K562 (cell line): ENCODE measurements at regions of chr6 and their contacts with region 1.

Region 1: DNA sequence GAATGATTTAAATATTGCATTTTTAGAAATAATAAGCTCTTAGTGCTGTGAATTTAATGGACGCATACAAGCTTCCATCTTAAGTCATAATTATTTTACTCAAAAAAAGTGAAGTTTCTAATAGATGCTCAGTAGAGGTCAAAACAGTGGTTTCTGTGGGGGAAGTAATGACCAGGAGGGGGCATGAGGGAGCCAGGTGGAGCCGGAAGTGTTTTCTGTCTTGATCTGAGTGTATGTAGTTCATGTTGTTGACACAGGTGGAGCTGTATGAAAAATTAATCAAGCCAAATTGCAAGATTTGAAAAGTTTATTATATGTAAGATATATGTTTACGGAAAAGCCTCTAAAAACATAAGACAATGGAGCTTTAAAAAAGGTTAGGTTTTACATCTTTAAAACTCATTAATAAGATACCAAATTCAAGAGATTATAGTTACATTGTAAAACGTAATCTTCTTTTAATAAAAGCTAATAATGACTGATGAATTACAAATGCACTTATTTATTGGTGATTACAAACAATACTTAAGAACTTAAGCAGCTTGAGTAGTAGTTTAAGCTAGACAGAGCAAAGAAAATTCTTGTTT is 68.0 kb downstream of the PLAGL1 start:
- DNase-seq: peak; percentile 81 to 90 (median 86)
- ATAC-seq: peak; percentile 95
- H3K4me3 ChIP-seq: no peak overlapping the region
- H3K27ac ChIP-seq: no peak overlapping the region
- H3K4me1 ChIP-seq: peaks cover 0 to 3% of the 10 kb centered on the region in 2 experiments; a peak in 1 of 5 replicates
- H3K27me3 ChIP-seq: peaks cover 0 to under 1% of the 10 kb centered on the region in 2 experiments; a peak in 1 of 5 replicates
- CTCF ChIP-seq: peak; percentile 91 to 99 (median 98)
- EP300 ChIP-seq: no peak
- POLR2A ChIP-seq: no peak
- RAD21 ChIP-seq: peak; percentile 78 to 86

Region 2: GRCh38 chr6:143575440-143575839 is 364.7 kb before region 1 on chr6:
- CTCF ChIA-PET with region 1: no interaction called
- POLR2A ChIA-PET with region 1: interaction called, 3 read pairs
- in situ Hi-C with region 1: loop called (anchors 5 kb)
- intact Hi-C with region 1: loop called (anchors 2 kb)
- DNase-seq: peak; percentile 79 to 85 (median 84)
- ATAC-seq: peak; percentile 95
- H3K4me3 ChIP-seq: no peak overlapping the region
- H3K27ac ChIP-seq: no peak overlapping the region
- H3K4me1 ChIP-seq: no peaks in the 10 kb centered on the region
- H3K27me3 ChIP-seq: peaks cover 0 to 3% of the 10 kb centered on the region in 2 experiments; a peak in 1 of 5 replicates
- CTCF ChIP-seq: peak; percentile 86 to 97 (median 94)
- EP300 ChIP-seq: no peak
- POLR2A ChIP-seq: no peak
- RAD21 ChIP-seq: peak; percentile 99

Region 3: DNA sequence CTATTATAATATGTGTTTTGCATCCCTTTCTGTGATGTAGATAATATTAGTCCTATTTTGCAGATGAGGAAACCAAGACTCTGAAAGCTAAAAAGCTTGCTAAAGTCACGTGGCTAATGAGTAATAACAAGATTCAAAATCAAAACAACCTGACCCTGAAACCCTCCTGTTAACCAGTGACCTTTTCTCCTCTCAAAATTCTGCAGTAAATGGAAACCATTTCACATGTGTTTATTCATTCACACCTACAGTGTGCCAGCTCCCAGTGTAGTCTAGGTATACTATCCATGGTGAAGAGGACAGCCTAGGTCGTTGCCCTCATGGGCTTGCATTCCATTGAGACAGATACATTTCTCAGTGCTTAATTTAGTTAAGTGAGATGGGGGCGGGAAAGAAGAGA is 292.9 kb before region 1 on chr6:
- CTCF ChIA-PET with region 1: no interaction called
- POLR2A ChIA-PET with region 1: no interaction called
- in situ Hi-C with region 1: no loop called
- intact Hi-C with region 1: no loop called
- DNase-seq: no peak
- ATAC-seq: no peak
- H3K4me3 ChIP-seq: no peak overlapping the region
- H3K27ac ChIP-seq: no peak overlapping the region
- H3K4me1 ChIP-seq: peaks cover 3 to 5% of the 10 kb centered on the region in 2 experiments; a peak in 3 of 5 replicates
- H3K27me3 ChIP-seq: no peaks in the 10 kb centered on the region; a peak in 1 of 5 replicates
- CTCF ChIP-seq: no peak
- EP300 ChIP-seq: no peak
- POLR2A ChIP-seq: no peak
- RAD21 ChIP-seq: no peak

Region 4: DNA sequence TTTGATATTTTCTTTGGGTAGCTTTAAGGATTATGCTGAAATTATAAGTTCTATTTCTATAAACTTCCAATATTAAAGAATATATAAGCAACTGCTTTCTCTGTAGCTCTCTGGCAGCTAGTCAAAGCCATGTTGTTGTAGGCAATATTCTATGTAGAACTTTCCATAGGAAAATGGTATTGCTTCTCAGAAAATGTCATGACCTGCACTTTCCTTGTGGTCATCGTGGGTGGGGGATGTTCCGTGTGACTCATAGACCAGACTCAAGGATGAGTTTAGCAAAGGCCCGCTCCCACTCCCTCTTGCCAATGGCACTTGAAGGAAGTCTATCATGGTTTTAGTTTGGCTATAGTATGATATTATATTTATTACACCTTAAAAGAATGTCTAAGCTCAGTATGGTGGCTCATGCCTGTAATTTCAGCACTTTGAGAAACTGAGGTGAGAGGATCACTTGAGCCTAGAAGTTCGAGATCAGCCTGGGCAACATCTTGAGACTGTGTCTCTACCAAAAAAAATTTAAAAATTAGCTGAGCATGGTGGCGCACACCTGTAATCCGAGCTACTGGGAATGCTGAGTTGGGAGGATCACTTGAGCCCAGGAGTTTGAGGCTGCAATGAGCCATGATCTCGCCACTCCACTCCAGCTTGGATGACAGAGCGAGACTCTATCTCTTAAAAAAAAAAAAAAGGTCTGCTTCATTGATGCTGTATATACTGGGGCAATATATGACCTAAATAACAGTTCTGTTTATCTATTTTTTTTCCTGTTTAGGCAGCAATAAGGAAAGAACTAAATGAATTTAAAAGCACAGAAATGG is 133.6 kb before region 1 on chr6:
- CTCF ChIA-PET with region 1: no interaction called
- POLR2A ChIA-PET with region 1: no interaction called
- in situ Hi-C with region 1: no loop called
- intact Hi-C with region 1: loop called (anchors 5 kb)
- DNase-seq: peak; percentile 76 to 95 (median 85)
- ATAC-seq: peak; percentile 81
- H3K4me3 ChIP-seq: no peak overlapping the region
- H3K27ac ChIP-seq: peak overlapping the region; percentile 84
- H3K4me1 ChIP-seq: peaks cover 47 to 52% of the 10 kb centered on the region in 2 experiments
- H3K27me3 ChIP-seq: no peaks in the 10 kb centered on the region
- CTCF ChIP-seq: no peak
- EP300 ChIP-seq: peak; percentile 95
- POLR2A ChIP-seq: no peak
- RAD21 ChIP-seq: peak; percentile 6 to 20; a peak in 2 of 4 replicates

Region 5: GRCh38 chr6:144013486-144013909 is 73.4 kb after region 1 on chr6:
- CTCF ChIA-PET with region 1: interaction called, 31 read pairs
- POLR2A ChIA-PET with region 1: interaction called, 5 read pairs
- in situ Hi-C with region 1: loop called (anchors 5 kb)
- intact Hi-C with region 1: loop called (anchors 1 kb)
- DNase-seq: peak; percentile 61 to 88 (median 64)
- ATAC-seq: peak; percentile 92
- H3K4me3 ChIP-seq: no peak overlapping the region
- H3K27ac ChIP-seq: no peak overlapping the region
- H3K4me1 ChIP-seq: peaks cover 0 to 1% of the 10 kb centered on the region in 2 experiments; a peak in 1 of 5 replicates
- H3K27me3 ChIP-seq: peaks cover 0 to 2% of the 10 kb centered on the region in 2 experiments; a peak in 1 of 5 replicates
- CTCF ChIP-seq: peak; percentile 93 to 97 (median 93)
- EP300 ChIP-seq: no peak
- POLR2A ChIP-seq: no peak
- RAD21 ChIP-seq: peak; percentile 98 to 99

Region 6: DNA sequence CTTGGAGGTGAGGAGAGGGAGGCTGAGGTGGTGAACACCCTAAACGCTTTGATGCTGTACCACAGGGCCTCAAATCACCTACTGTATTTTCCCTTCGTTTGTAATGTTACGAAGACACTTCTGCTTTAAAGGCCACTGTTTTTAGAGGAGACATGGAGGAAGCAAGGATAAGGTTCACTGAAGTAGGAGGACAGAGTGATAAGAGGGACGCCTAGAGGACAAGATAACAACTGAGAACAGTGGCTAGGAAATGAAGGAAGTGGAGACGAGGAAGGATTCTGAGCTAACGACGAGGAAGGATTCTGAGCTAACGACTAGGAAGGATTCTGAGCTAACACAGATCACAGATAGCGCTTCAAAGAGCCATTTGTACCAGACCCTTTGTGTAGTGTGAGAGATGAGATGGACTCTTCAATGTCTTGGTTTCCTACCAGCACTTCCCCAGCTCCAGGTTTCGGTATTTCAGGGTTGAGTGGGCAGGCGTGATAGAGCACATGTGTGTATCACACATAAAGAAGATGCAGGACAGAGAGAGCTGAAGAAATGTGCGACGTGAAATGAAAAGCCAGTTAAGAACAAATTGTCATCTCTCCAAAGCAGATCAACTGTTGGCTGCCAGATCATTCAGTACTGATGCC is 147.8 kb after region 1 on chr6:
- CTCF ChIA-PET with region 1: interaction called, 7 read pairs
- POLR2A ChIA-PET with region 1: no interaction called
- in situ Hi-C with region 1: no loop called
- intact Hi-C with region 1: loop called (anchors 2 kb)
- DNase-seq: peak; percentile 38 to 72 (median 54)
- ATAC-seq: peak; percentile 89
- H3K4me3 ChIP-seq: no peak overlapping the region
- H3K27ac ChIP-seq: peak overlapping the region; percentile 59
- H3K4me1 ChIP-seq: peaks cover 0 to 13% of the 10 kb centered on the region in 2 experiments; a peak in 4 of 5 replicates
- H3K27me3 ChIP-seq: no peaks in the 10 kb centered on the region
- CTCF ChIP-seq: peak; percentile 25 to 61 (median 54); a peak in 5 of 6 replicates
- EP300 ChIP-seq: no peak
- POLR2A ChIP-seq: no peak
- RAD21 ChIP-seq: peak; percentile 77 to 79

Region 7: DNA sequence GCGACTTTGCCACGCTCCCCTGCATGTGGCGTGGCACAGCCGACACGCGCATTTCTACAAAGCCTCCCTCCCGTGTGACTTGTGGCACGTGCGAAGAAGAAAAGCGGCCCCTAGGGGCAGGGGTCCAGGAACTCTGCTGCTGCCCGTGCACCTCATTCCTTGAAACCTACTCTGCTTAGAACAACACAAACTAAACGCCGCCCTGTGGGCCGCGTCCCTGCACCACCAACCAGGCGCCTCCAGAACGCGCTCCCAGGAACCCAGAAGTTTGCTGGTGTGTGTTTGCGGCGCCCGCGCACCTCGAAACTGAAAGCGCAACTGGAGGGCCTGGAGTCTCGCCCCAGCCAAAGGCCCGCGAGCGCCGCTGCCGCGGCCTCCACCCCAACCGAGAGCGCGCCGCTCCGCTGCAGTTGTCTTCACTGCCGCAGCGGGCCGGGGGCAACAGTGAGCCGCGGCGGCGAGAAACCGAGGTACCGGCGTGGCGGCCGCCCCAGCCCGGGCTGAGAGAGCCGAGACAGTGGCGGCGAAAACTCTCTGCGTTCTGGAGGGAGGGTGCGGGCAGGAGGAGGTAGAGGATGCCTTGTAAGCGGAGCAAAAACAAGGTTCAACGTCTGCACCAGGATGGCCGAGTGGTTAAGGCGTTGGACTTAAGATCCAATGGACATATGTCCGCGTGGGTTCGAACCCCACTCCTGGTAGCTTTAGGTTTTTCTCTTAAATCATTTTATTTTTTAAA is 276.0 kb after region 1 on chr6:
- CTCF ChIA-PET with region 1: interaction called, 7 read pairs
- POLR2A ChIA-PET with region 1: no interaction called
- in situ Hi-C with region 1: no loop called
- intact Hi-C with region 1: loop called (anchors 2 kb)
- DNase-seq: peak; percentile 89 to 96 (median 92)
- ATAC-seq: peak; percentile 94
- H3K4me3 ChIP-seq: peak overlapping the region; percentile 75
- H3K27ac ChIP-seq: peak overlapping the region; percentile 90
- H3K4me1 ChIP-seq: peaks cover 14% of the 10 kb centered on the region in 2 experiments
- H3K27me3 ChIP-seq: no peaks in the 10 kb centered on the region
- CTCF ChIP-seq: peak; percentile 75 to 90 (median 76)
- EP300 ChIP-seq: peak; percentile 78
- POLR2A ChIP-seq: peak; percentile 67
- RAD21 ChIP-seq: peak; percentile 25 to 56; a peak in 3 of 4 replicates